MCF 10A (cell line): ENCODE measurements at regions of chr4 and their contacts with region 1.

Region 1: DNA sequence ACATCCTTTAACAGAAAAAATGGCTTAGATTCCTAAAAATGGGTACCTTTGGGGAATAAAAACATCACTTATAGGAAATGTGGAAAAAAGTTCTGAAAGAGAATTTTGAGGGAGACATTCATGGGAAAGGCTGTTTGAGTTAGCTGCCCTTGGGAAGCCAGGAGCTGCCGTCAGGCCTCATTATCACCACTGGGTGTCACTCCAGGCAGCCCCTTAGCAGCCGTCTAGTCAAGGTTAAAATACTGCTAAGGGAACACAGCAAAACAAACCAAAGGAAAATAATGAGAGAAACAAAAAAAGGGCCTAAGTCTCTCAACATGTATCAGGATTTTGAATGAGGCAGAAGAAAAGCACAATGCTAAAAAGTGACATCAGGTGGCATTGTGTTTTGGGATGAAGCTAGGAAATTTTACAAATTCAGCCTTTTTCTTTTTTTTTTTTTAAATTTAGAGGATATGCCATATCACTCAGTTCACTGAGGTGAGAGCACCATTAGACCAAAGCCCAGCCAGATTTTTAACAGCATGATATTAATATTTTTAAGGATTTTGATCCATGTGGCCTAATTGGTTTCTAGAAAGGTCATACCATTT is 235.3 kb downstream of the GPAT3 start:
- DNase-seq: peak; percentile 71
- H3K4me3 Mint-ChIP-seq: no peak overlapping the region
- H3K27ac Mint-ChIP-seq: no peak overlapping the region
- H3K4me1 Mint-ChIP-seq: no peaks in the 10 kb centered on the region
- H3K27me3 Mint-ChIP-seq: peaks cover 37% of the 10 kb centered on the region
- CTCF ChIP-seq: peak; percentile 79

Region 2: DNA sequence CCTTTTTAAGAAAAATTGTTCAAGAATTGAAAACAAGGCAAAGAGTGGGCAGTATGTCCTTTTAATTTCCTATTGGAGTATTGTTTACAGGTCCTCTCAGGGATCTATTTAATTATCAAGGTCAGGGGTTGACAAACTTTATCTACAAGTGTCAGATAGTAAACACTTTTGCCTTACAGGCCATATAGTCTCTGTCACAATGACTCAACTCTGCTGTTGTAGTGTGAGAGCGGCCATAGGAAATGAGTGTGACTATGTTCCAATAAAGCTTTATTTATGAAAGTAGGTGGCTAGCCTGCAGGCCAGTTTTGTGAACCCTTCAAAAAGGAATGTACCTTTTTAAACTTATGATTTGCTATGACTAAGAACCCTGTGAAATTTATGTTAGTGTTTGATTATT is 79.2 kb before region 1 on chr4:
- CTCF ChIA-PET with region 1: no interaction called
- POLR2A ChIA-PET with region 1: no interaction called
- intact Hi-C with region 1: no loop called
- DNase-seq: peak; percentile 32
- H3K4me3 Mint-ChIP-seq: no peak overlapping the region
- H3K27ac Mint-ChIP-seq: no peak overlapping the region
- H3K4me1 Mint-ChIP-seq: no peaks in the 10 kb centered on the region
- H3K27me3 Mint-ChIP-seq: peaks cover 11% of the 10 kb centered on the region
- CTCF ChIP-seq: no peak

Region 3: DNA sequence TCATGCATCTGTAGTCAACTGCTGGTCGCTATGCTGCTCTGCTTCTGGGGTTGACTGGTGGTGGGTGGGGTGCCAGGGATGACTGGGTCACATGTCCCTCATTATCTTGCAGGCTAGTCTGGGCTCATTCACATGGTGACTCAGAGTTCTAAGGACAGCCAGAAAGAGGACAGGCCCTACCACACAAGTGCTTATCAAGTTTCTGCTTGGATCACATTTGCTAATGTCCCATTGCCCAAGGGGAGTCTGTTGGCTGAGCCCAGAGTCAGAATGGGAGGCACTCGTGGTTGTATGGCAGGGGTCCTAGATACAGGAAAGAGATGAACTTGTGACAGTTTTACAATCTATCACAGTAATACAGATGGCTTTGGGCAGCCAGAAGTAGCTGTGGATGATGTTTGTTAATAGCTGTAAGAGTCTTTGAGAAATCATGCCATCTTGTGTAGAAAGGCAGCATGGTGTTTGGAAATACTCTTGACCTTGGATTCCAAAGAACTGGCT is 14.0 kb before region 1 on chr4:
- CTCF ChIA-PET with region 1: interaction called, 25 read pairs
- POLR2A ChIA-PET with region 1: no interaction called
- intact Hi-C with region 1: no loop called
- DNase-seq: peak; percentile 25
- H3K4me3 Mint-ChIP-seq: no peak overlapping the region
- H3K27ac Mint-ChIP-seq: no peak overlapping the region
- H3K4me1 Mint-ChIP-seq: no peaks in the 10 kb centered on the region
- H3K27me3 Mint-ChIP-seq: no peaks in the 10 kb centered on the region
- CTCF ChIP-seq: no peak

Region 4: GRCh38 chr4:83905952-83906351 is 134.7 kb after region 1 on chr4:
- CTCF ChIA-PET with region 1: no interaction called
- POLR2A ChIA-PET with region 1: no interaction called
- intact Hi-C with region 1: no loop called
- DNase-seq: no peak
- H3K4me3 Mint-ChIP-seq: no peak overlapping the region
- H3K27ac Mint-ChIP-seq: no peak overlapping the region
- H3K4me1 Mint-ChIP-seq: peaks cover 5% of the 10 kb centered on the region
- H3K27me3 Mint-ChIP-seq: peaks cover 20% of the 10 kb centered on the region
- CTCF ChIP-seq: no peak

Region 5: GRCh38 chr4:84126061-84126787 is 355.0 kb after region 1 on chr4:
- CTCF ChIA-PET with region 1: no interaction called
- POLR2A ChIA-PET with region 1: no interaction called
- intact Hi-C with region 1: no loop called
- DNase-seq: no peak
- H3K4me3 Mint-ChIP-seq: peak overlapping the region; percentile 1
- H3K27ac Mint-ChIP-seq: no peak overlapping the region
- H3K4me1 Mint-ChIP-seq: no peaks in the 10 kb centered on the region
- H3K27me3 Mint-ChIP-seq: no peaks in the 10 kb centered on the region
- CTCF ChIP-seq: no peak

Region 6: GRCh38 chr4:84258905-84259830 is 488.0 kb after region 1 on chr4:
- CTCF ChIA-PET with region 1: no interaction called
- POLR2A ChIA-PET with region 1: no interaction called
- intact Hi-C with region 1: loop called (anchors 1 kb)
- DNase-seq: peak; percentile 53
- H3K4me3 Mint-ChIP-seq: no peak overlapping the region
- H3K27ac Mint-ChIP-seq: no peak overlapping the region
- H3K4me1 Mint-ChIP-seq: peaks cover 5% of the 10 kb centered on the region
- H3K27me3 Mint-ChIP-seq: peaks cover 80% of the 10 kb centered on the region
- CTCF ChIP-seq: peak; percentile 69

Region 7: GRCh38 chr4:84503495-84504437 is 732.6 kb after region 1 on chr4:
- CTCF ChIA-PET with region 1: interaction called, 23 read pairs
- POLR2A ChIA-PET with region 1: no interaction called
- intact Hi-C with region 1: loop called (anchors 1 kb)
- DNase-seq: peak; percentile 77
- H3K4me3 Mint-ChIP-seq: no peak overlapping the region
- H3K27ac Mint-ChIP-seq: no peak overlapping the region
- H3K4me1 Mint-ChIP-seq: peaks cover 6% of the 10 kb centered on the region
- H3K27me3 Mint-ChIP-seq: peaks cover 49% of the 10 kb centered on the region
- CTCF ChIP-seq: peak; percentile 67